ENCODE measurements at regions of chr12 and their contacts with region 1.

Region 1: GRCh38 chr12:95022477-95022876 is 19.0 kb upstream of the NDUFA12 start:
- DNase-seq: no peak
- H3K4me3 ChIP-seq: no peak overlapping the region
- H3K27ac ChIP-seq: no peak overlapping the region
- H3K4me1 ChIP-seq: no peaks in the 10 kb centered on the region
- H3K27me3 ChIP-seq: no peaks in the 10 kb centered on the region
- CTCF ChIP-seq: no peak

Region 2: GRCh38 chr12:94994312-94994711 is 28.2 kb before region 1 on chr12:
- CTCF ChIA-PET with region 1: no interaction called
- dilution Hi-C with region 1: no loop called
- in situ Hi-C with region 1: no loop called
- intact Hi-C with region 1: no loop called
- DNase-seq: peak; percentile 86
- H3K4me3 ChIP-seq: no peak overlapping the region
- H3K27ac ChIP-seq: peak overlapping the region; percentile 34
- H3K4me1 ChIP-seq: peaks cover 12% of the 10 kb centered on the region
- H3K27me3 ChIP-seq: no peaks in the 10 kb centered on the region
- CTCF ChIP-seq: peak in 1 of 2 donors; percentile 16

Region 3: DNA sequence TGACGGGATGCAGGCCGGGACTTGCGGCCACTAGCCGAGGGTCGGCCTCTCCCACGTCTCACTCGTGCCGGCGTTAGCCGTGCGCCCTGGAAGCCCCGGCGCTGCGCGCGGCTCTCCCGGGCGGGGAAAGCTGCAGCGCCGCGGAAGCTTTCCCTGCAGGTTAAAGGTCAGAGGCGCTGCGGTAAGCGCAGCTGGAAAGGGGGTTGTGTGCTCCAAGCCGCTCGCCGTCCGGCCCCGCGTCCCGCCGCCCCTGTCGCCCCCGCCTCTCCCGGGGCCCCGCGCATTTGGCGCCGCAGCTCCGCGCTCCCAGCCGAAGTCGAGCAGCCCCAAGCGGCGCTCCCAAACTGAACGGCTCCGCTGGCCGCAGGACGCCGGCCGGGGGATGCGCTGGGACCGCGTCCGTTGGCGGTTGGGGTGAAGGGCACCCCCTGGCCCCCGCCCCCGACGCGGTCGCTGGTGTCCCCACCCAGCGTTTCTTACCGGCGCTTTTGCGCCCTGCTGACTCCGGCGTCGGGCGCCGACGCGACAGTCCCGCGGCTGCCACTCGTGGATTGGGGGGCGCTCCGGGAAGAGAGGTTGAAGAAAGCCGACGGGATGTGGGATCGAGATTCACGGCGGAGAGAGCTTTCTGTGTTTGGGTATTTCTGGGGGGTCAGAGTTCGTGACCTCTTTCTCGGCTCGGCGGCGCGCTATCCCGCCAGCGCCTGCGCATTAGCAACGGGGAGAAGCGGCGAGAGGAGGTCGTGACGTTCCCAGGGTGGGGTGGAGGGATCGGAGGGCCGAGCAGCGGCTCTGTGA is 50.6 kb after region 1 on chr12 and contains the start of gene NR2C1:
- CTCF ChIA-PET with region 1: no interaction called
- dilution Hi-C with region 1: loop called (anchors 5 kb)
- in situ Hi-C with region 1: no loop called
- intact Hi-C with region 1: no loop called
- DNase-seq: peak; percentile 87
- H3K4me3 ChIP-seq: peak within 1 kb of the TSS; percentile 90 to 94 (median 92)
- H3K27ac ChIP-seq: peak within 1 kb of the TSS; percentile 84
- H3K4me1 ChIP-seq: peaks cover 5% of the 10 kb centered on the region
- H3K27me3 ChIP-seq: no peaks in the 10 kb centered on the region
- CTCF ChIP-seq: no peak
- total RNA-seq, gene NR2C1: 23.2 to 32.8 TPM

Measured in mammary epithelial cell (primary cell).